ENCODE measurements at regions of chr12 and their contacts with region 1.

Region 1: DNA sequence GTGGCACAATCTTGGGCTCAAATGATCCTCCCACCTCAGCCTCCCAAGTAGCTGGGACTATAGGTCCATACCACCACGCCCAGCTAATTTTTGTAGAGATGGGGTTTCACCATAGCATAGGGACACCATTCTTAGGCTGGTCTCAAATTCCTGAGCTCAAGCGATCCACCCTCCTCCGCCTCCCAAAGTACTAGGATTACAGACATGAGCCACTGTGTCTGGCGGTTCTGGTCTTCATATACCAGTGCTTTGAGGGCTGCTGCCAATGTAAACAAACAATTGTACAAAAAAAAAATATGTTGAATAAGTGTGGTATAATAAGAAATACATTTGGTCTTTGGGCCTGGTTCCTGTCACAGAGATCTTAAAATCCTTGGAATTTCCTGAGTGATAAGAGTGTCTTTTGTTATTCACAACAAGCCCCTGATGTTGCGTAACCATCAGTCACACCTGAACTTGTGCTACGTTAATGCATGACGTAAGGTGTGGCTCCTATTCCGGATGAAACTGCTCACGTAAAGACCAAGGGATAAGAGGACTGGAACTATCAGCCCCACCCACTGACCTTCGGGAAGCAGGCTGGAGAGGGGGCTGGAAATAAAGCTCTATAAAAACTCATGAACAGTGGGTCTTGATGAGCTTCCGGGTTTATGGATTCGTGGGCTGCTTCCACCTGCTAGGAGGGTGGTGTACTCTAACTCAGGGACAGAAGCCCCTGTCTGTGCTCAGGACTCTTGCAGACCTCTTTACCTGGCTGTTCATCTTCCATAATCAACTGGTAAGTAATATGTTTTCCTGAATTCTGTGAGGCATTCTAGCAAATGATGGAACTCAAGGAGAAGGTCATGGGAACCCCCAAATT is 16.5 kb upstream of the RIMKLB start:
- DNase-seq: no peak
- H3K4me3 ChIP-seq: no peak overlapping the region
- H3K27ac ChIP-seq: peak overlapping the region in 3 of 4 donors; percentile 41 to 49 (median 44)
- H3K4me1 ChIP-seq: peaks cover 0 to 10% (median 0%) of the 10 kb centered on the region in 4 donors
- H3K27me3 ChIP-seq: no peaks in the 10 kb centered on the region
- CTCF ChIP-seq: no peak
- EP300 ChIP-seq: no peak
- POLR2A ChIP-seq: no peak

Region 2: GRCh38 chr12:8823565-8824300 is 142.5 kb after region 1 on chr12:
- intact Hi-C with region 1: loop called (anchors 1 kb)
- DNase-seq: no peak
- H3K4me3 ChIP-seq: no peak overlapping the region
- H3K27ac ChIP-seq: peak overlapping the region in 1 of 4 donors; percentile 4
- H3K4me1 ChIP-seq: peaks cover 0 to 12% (median 4%) of the 10 kb centered on the region in 4 donors
- H3K27me3 ChIP-seq: no peaks in the 10 kb centered on the region
- CTCF ChIP-seq: peak; percentile 51 to 83 (median 62)
- EP300 ChIP-seq: no peak
- POLR2A ChIP-seq: no peak

Region 3: DNA sequence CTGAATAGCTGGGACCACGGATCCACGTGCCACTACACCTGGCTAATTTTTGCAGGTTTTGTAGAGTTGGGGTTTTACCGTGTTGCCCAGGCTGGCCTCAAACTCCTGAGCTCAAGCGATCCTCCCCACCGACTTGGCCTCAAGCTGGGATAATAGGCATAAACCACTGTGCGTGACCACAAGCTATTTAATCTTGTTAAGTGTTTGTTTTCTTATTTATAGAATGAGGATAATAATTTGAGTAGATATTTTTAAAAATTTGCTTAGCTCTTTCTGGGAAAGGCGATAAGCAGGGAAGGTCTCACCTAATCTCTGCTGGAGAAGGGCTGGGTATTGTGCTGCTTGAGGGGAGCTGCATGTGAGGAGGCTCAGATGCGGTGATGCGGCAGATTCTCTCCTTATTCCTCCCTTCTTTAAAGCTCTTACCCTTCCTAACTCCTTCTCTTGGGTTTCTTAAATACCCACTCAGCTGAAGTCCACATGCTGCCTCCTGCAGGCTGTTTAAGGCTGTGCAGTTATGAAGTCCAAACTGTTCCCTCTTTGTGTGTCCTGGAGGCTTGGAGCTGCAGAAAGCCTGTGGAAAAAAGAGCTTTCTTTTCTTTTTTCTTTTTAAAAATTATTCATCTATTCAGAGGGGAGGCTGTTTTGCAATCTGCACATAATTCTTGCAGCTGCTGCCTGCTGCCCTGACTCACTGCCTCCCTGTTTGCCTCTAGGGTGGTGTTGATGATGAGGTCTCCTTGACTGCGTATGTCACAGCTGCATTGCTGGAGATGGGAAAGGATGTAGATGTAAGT is 179.1 kb after region 1 on chr12:
- intact Hi-C with region 1: loop called (anchors 5 kb)
- DNase-seq: no peak
- H3K4me3 ChIP-seq: no peak overlapping the region
- H3K27ac ChIP-seq: no peak overlapping the region
- H3K4me1 ChIP-seq: no peaks in the 10 kb centered on the region
- H3K27me3 ChIP-seq: no peaks in the 10 kb centered on the region
- CTCF ChIP-seq: peak in 3 of 4 experiments; percentile 33 to 61 (median 43)
- EP300 ChIP-seq: no peak
- POLR2A ChIP-seq: no peak

Region 4: GRCh38 chr12:8890313-8891085 is 209.2 kb after region 1 on chr12:
- intact Hi-C with region 1: loop called (anchors 1 kb)
- DNase-seq: no peak
- H3K4me3 ChIP-seq: peak overlapping the region; percentile 19 to 51 (median 44)
- H3K27ac ChIP-seq: peak overlapping the region in 3 of 4 donors; percentile 40 to 59 (median 53)
- H3K4me1 ChIP-seq: no peaks in the 10 kb centered on the region
- H3K27me3 ChIP-seq: no peaks in the 10 kb centered on the region
- CTCF ChIP-seq: peak; percentile 63 to 86 (median 76)
- EP300 ChIP-seq: no peak
- POLR2A ChIP-seq: no peak

Measured in sigmoid colon (tissue), 7 donors.